OCI-LY7 (cell line): ENCODE measurements at regions of chr3 and their contacts with region 1.

Region 1: DNA sequence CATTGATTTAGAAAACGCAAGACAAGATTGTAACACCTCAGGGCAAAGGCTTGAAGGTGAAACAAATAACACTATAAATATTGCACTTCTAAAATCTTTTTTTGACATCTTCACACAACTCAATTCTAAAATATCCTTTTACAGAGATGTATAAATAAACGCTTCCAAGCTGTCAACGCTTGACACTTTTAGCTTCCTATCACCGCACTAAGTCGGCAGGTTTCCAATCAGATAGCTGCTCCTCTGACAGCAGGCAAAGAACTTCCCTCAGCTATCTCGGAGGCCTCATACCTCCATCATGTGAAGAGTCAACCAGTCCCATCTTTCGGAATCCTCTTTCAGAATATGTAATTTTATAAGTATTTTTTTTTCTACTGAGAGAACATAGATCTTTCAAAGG is 71.0 kb downstream of the PCOLCE2 start:
- DNase-seq: no peak
- H3K4me3 ChIP-seq: no peak overlapping the region
- H3K27ac ChIP-seq: no peak overlapping the region
- H3K4me1 ChIP-seq: no peaks in the 10 kb centered on the region
- CTCF ChIP-seq: no peak

Region 2: DNA sequence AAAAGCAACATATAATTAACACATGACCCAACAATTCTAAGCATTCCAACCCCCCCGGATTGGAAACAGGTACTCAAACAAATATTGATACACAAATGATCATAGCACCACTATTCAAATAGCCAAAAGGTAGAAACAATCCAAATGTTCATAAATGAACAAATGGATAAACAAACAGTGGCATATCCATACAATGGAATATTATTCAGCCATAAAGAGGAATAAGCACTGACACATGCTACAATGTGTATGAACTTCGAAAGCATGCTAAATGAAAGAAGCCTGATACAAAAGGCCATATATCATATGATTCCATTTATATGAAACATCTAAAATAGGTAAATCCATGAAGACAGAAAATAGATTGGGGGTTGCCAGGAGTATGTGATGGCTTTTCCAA is 432.8 kb before region 1 on chr3:
- CTCF ChIA-PET with region 1: no interaction called
- POLR2A ChIA-PET with region 1: no interaction called
- intact Hi-C with region 1: no loop called
- DNase-seq: no peak
- H3K4me3 ChIP-seq: no peak overlapping the region
- H3K27ac ChIP-seq: no peak overlapping the region
- H3K4me1 ChIP-seq: no peaks in the 10 kb centered on the region
- CTCF ChIP-seq: no peak

Region 3: DNA sequence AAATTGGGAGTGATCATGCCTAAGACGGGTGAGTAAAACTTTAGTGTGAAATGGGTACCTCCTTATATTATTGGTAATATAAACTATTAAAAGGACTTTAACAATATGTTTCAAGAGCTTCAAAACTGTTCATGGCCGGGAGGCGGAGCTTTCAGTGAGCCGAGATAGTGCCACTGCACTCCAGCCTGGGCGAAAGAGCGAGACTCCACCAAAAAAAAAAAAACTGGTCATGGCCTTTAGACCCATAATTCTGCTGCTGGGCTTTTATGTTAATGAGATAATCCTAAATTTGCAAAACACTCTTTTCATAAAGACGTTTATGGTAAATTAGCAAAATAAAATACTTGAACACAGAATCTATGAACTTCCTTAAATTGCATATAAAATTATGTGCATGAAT is 71.3 kb before region 1 on chr3:
- CTCF ChIA-PET with region 1: no interaction called
- POLR2A ChIA-PET with region 1: no interaction called
- intact Hi-C with region 1: loop called (anchors 2 kb)
- DNase-seq: no peak
- H3K4me3 ChIP-seq: no peak overlapping the region
- H3K27ac ChIP-seq: no peak overlapping the region
- H3K4me1 ChIP-seq: no peaks in the 10 kb centered on the region
- CTCF ChIP-seq: no peak

Region 4: GRCh38 chr3:142802891-142803290 is 15.0 kb before region 1 on chr3:
- CTCF ChIA-PET with region 1: no interaction called
- POLR2A ChIA-PET with region 1: no interaction called
- intact Hi-C with region 1: no loop called
- DNase-seq: no peak
- H3K4me3 ChIP-seq: no peak overlapping the region
- H3K27ac ChIP-seq: no peak overlapping the region
- H3K4me1 ChIP-seq: no peaks in the 10 kb centered on the region
- CTCF ChIP-seq: no peak